ENCODE measurements at regions of chr2 and their contacts with region 1.

Region 1: DNA sequence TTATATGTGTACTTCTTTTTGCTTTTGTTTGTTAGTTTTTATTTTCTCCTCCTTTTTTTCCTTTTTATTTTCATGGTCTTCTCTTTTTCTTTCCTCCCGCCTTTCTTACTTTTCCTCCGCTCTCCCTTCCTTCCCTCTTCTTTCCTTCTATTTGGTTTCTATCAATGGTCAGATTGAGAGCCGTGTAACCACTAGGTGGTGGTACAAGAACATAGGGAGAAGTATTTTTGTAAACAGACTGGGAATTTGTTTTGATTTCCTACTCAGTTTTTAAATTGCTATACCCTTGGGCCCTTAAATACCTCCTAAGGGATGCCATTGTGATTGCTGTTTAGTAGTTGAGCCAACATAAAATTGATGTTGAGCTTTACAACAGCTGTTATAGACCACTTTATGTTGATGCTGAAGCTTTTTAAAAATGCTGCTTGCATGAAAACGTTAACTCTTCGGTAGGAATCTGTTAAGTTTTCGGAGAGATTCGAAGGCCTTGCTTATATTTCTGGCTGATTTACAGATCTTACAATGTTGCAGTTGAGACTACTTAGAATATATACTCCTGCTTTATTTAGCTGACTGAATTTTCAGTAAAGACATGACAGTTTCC is 124.2 kb downstream of the UBE2E3 start:
- DNase-seq: peak; percentile 81
- ATAC-seq: peak; percentile 59
- H3K4me3 ChIP-seq: no peak overlapping the region
- H3K27ac ChIP-seq: no peak overlapping the region
- H3K4me1 ChIP-seq: peaks cover 33% of the 10 kb centered on the region
- H3K27me3 ChIP-seq: no peaks in the 10 kb centered on the region
- CTCF ChIP-seq: peak; percentile 95

Region 2: GRCh38 chr2:181190711-181191110 is 86.1 kb after region 1 on chr2:
- CTCF ChIA-PET with region 1: no interaction called
- POLR2A ChIA-PET with region 1: no interaction called
- intact Hi-C with region 1: no loop called
- DNase-seq: no peak
- ATAC-seq: no peak
- H3K4me3 ChIP-seq: no peak overlapping the region
- H3K27ac ChIP-seq: no peak overlapping the region
- H3K4me1 ChIP-seq: peaks cover 9% of the 10 kb centered on the region
- H3K27me3 ChIP-seq: no peaks in the 10 kb centered on the region
- CTCF ChIP-seq: no peak

Region 3: GRCh38 chr2:181203412-181203811 is 98.8 kb after region 1 on chr2:
- CTCF ChIA-PET with region 1: no interaction called
- POLR2A ChIA-PET with region 1: no interaction called
- intact Hi-C with region 1: loop called (anchors 5 kb)
- DNase-seq: peak; percentile 97
- ATAC-seq: peak; percentile 99
- H3K4me3 ChIP-seq: peak overlapping the region; percentile 0; the same call in 1 of the 2 replicates
- H3K27ac ChIP-seq: peak overlapping the region; percentile 62
- H3K4me1 ChIP-seq: peaks cover 19% of the 10 kb centered on the region
- H3K27me3 ChIP-seq: no peaks in the 10 kb centered on the region
- CTCF ChIP-seq: no peak

Region 4: GRCh38 chr2:181223234-181223633 is 118.6 kb after region 1 on chr2:
- CTCF ChIA-PET with region 1: no interaction called
- POLR2A ChIA-PET with region 1: no interaction called
- intact Hi-C with region 1: no loop called
- DNase-seq: no peak
- ATAC-seq: no peak
- H3K4me3 ChIP-seq: no peak overlapping the region
- H3K27ac ChIP-seq: no peak overlapping the region
- H3K4me1 ChIP-seq: no peaks in the 10 kb centered on the region
- H3K27me3 ChIP-seq: no peaks in the 10 kb centered on the region
- CTCF ChIP-seq: no peak

Region 5: GRCh38 chr2:181457121-181457740 is 352.6 kb after region 1 on chr2 and contains the start of gene ITGA4:
- CTCF ChIA-PET with region 1: no interaction called
- POLR2A ChIA-PET with region 1: no interaction called
- intact Hi-C with region 1: loop called (anchors 2 kb)
- DNase-seq: peak; percentile 69
- ATAC-seq: peak; percentile 99
- H3K4me3 ChIP-seq: peak within 1 kb of the TSS; percentile 69
- H3K27ac ChIP-seq: no peak within 1 kb of the TSS
- H3K4me1 ChIP-seq: no peaks in the 10 kb centered on the region
- H3K27me3 ChIP-seq: no peaks in the 10 kb centered on the region
- CTCF ChIP-seq: peak; percentile 74
- total RNA-seq, gene ITGA4: 0.81 and 1.0 TPM in 2 replicates

Region 6: DNA sequence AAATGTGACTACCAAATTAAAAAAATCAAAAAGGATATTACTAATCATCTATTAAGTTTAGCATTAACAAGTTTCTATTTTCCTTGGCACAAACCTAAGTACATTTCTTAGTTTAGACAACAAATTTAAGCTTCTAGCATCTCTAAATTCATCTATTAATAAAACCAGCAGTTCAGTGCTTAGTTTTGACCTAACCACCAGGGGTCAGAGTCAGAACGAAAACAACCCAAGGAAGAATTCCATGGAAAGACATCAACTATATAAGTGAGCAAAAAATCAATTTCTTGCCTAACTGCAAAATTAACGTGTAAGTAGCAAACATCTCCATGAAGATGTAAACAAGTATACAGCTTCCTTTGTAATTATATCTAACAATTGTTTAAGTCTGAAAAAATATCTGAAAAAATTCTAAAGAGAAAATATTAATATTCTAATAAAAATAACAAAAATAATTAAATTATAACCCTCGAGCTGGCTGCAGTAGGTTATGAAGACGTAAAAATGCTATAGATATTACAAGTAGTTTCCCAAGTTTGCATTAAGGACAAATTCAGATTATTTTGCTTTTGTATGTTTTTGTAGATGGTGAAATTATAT is 468.6 kb after region 1 on chr2:
- CTCF ChIA-PET with region 1: no interaction called
- POLR2A ChIA-PET with region 1: no interaction called
- intact Hi-C with region 1: loop called (anchors 5 kb)
- DNase-seq: peak; percentile 65
- ATAC-seq: no peak; the same call in 1 of the 2 replicates
- H3K4me3 ChIP-seq: no peak overlapping the region
- H3K27ac ChIP-seq: no peak overlapping the region
- H3K4me1 ChIP-seq: 0 out of 2 replicates have a peak, but pooled peaks cover 7% of the 10 kb centered on the region
- H3K27me3 ChIP-seq: no peaks in the 10 kb centered on the region
- CTCF ChIP-seq: peak; percentile 75

Region 7: GRCh38 chr2:182132605-182133004 is 1028.0 kb after region 1 on chr2:
- CTCF ChIA-PET with region 1: no interaction called
- POLR2A ChIA-PET with region 1: no interaction called
- intact Hi-C with region 1: loop called (anchors 2 kb)
- DNase-seq: peak; percentile 29
- ATAC-seq: peak; percentile 71
- H3K4me3 ChIP-seq: no peak overlapping the region
- H3K27ac ChIP-seq: no peak overlapping the region
- H3K4me1 ChIP-seq: peaks cover 11% of the 10 kb centered on the region
- H3K27me3 ChIP-seq: no peaks in the 10 kb centered on the region
- CTCF ChIP-seq: peak; percentile 54